GM12878 (cell line): ENCODE measurements at regions of chr12 and their contacts with region 1.

Region 1: GRCh38 chr12:64796208-64796845 is 28.1 kb upstream of the TBC1D30 start:
- DNase-seq: no peak
- ATAC-seq: peak; percentile 86
- H3K4me3 ChIP-seq: no peak overlapping the region
- H3K27ac ChIP-seq: no peak overlapping the region
- H3K4me1 ChIP-seq: peaks cover 12% of the 10 kb centered on the region
- H3K27me3 ChIP-seq: no peaks in the 10 kb centered on the region
- CTCF ChIP-seq: peak; percentile 64 to 77 (median 71)
- EP300 ChIP-seq: no peak
- POLR2A ChIP-seq: no peak
- RAD21 ChIP-seq: peak; percentile 87

Region 2: GRCh38 chr12:64551698-64552097 is 244.6 kb before region 1 on chr12:
- CTCF ChIA-PET with region 1: interaction called, 29 read pairs
- POLR2A ChIA-PET with region 1: no interaction called
- RAD21 ChIA-PET with region 1: interaction called, 12 read pairs
- SMC1A ChIA-PET with region 1: no interaction called
- in situ Hi-C with region 1: no loop called
- intact Hi-C with region 1: no loop called
- DNase-seq: no peak
- ATAC-seq: no peak
- H3K4me3 ChIP-seq: no peak overlapping the region
- H3K27ac ChIP-seq: no peak overlapping the region
- H3K4me1 ChIP-seq: no peaks in the 10 kb centered on the region; the same call in 1 of the 2 replicates
- H3K27me3 ChIP-seq: no peaks in the 10 kb centered on the region; a peak in 1 of 4 replicates
- CTCF ChIP-seq: no peak
- EP300 ChIP-seq: no peak
- POLR2A ChIP-seq: no peak
- RAD21 ChIP-seq: no peak

Region 3: DNA sequence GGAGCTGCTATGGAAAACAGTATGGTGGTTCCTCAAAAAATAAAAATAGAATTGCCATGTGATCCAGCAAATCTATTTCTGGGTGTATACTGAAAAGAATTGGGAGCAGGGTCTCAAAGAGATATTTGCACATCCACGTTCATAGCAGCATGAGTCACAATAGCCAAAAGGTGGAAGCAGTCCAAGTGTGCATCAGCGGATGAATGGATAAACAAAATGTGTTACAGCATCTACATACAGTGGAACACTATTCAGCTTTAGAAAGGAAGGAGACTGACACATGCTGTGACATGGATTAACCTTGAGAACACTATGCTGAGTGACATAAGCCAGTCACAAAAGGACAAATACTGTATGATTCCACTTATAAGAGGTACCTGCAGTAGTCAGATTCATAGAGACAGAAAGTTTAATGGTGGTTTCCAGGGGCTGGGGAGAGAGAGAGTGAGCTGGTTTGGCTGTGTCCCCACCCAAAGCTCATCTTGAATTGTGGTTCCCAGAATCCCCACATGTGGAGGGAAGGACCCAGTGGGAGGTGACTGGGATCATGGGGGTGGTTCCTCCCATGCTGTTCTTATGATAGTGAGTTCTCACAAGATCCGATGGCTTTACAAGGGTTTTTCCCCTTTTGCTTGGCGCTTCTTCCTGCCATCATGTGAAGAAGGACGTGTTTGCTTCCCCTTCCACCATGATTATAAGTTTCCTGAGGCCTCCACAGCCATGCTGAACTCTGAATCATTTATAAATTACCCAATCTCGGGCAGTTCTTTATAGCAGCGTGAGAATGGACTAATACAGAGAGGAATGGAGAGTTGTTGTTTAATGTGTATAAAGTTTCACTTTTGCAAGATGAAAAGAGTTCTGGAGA is 10.5 kb after region 1 on chr12:
- CTCF ChIA-PET with region 1: interaction called, 20 read pairs
- POLR2A ChIA-PET with region 1: interaction called, 9 read pairs
- RAD21 ChIA-PET with region 1: interaction called, 3 read pairs
- SMC1A ChIA-PET with region 1: interaction called, 6 read pairs
- in situ Hi-C with region 1: no loop called
- intact Hi-C with region 1: no loop called
- DNase-seq: no peak
- ATAC-seq: no peak
- H3K4me3 ChIP-seq: no peak overlapping the region
- H3K27ac ChIP-seq: no peak overlapping the region
- H3K4me1 ChIP-seq: peaks cover 9% of the 10 kb centered on the region
- H3K27me3 ChIP-seq: no peaks in the 10 kb centered on the region
- CTCF ChIP-seq: no peak
- EP300 ChIP-seq: no peak
- POLR2A ChIP-seq: no peak
- RAD21 ChIP-seq: no peak

Region 4: GRCh38 chr12:64877363-64878004 is 81.2 kb after region 1 on chr12:
- CTCF ChIA-PET with region 1: interaction called, 192 read pairs
- POLR2A ChIA-PET with region 1: interaction called, 17 read pairs
- RAD21 ChIA-PET with region 1: interaction called, 54 read pairs
- SMC1A ChIA-PET with region 1: interaction called, 130 read pairs
- in situ Hi-C with region 1: no loop called
- intact Hi-C with region 1: no loop called
- DNase-seq: peak; percentile 78
- ATAC-seq: peak; percentile 82
- H3K4me3 ChIP-seq: peak overlapping the region; percentile 48
- H3K27ac ChIP-seq: peak overlapping the region; percentile 87
- H3K4me1 ChIP-seq: peaks cover 65% of the 10 kb centered on the region
- H3K27me3 ChIP-seq: no peaks in the 10 kb centered on the region
- CTCF ChIP-seq: no peak
- EP300 ChIP-seq: peak; percentile 70 to 87
- POLR2A ChIP-seq: no peak
- RAD21 ChIP-seq: no peak

Region 5: DNA sequence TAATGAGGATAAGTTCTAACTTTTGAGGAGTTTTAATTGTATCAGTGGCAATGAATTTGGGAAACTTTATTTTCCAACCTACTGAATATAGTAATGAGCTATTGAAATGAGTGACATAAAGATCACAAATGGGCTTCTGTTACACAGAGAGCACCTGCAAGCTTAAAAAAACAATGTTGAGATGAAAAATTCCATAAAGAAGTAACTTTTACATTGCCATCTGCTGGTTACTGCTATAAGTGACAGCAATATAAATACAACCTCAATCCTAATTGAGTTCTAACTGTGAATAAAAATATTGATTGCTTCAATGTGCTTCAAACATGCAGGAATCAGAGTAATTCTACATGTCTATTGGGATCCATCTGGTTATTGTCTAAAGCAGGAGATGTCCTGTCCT is 310.6 kb after region 1 on chr12:
- CTCF ChIA-PET with region 1: interaction called, 72 read pairs
- POLR2A ChIA-PET with region 1: no interaction called
- RAD21 ChIA-PET with region 1: interaction called, 25 read pairs
- SMC1A ChIA-PET with region 1: interaction called, 24 read pairs
- in situ Hi-C with region 1: no loop called
- intact Hi-C with region 1: loop called (anchors 5 kb)
- DNase-seq: no peak
- ATAC-seq: no peak
- H3K4me3 ChIP-seq: no peak overlapping the region
- H3K27ac ChIP-seq: no peak overlapping the region
- H3K4me1 ChIP-seq: no peaks in the 10 kb centered on the region
- H3K27me3 ChIP-seq: no peaks in the 10 kb centered on the region; a peak in 1 of 4 replicates
- CTCF ChIP-seq: peak; percentile 33 to 50 (median 39); a peak in 4 of 6 replicates
- EP300 ChIP-seq: no peak
- POLR2A ChIP-seq: no peak
- RAD21 ChIP-seq: peak; percentile 33

Region 6: GRCh38 chr12:65546528-65546927 is 750.2 kb after region 1 on chr12:
- CTCF ChIA-PET with region 1: no interaction called
- POLR2A ChIA-PET with region 1: no interaction called
- RAD21 ChIA-PET with region 1: no interaction called
- SMC1A ChIA-PET with region 1: no interaction called
- in situ Hi-C with region 1: no loop called
- intact Hi-C with region 1: no loop called
- DNase-seq: no peak
- ATAC-seq: no peak
- H3K4me3 ChIP-seq: no peak overlapping the region
- H3K27ac ChIP-seq: no peak overlapping the region
- H3K4me1 ChIP-seq: no peaks in the 10 kb centered on the region
- H3K27me3 ChIP-seq: no peaks in the 10 kb centered on the region
- CTCF ChIP-seq: no peak
- EP300 ChIP-seq: no peak
- POLR2A ChIP-seq: no peak
- RAD21 ChIP-seq: no peak